ENCODE measurements at regions of chr9 and their contacts with region 1.

Region 1: GRCh38 chr9:75953218-75953617 is 62.7 kb downstream of the PCSK5 start:
- DNase-seq: no peak
- ATAC-seq: no peak
- H3K4me3 ChIP-seq: no peak overlapping the region
- H3K27ac ChIP-seq: no peak overlapping the region
- H3K4me1 ChIP-seq: peaks cover 3% of the 10 kb centered on the region; the same call in 1 of the 2 replicates
- H3K27me3 ChIP-seq: no peaks in the 10 kb centered on the region
- CTCF ChIP-seq: no peak
- POLR2A ChIP-seq: no peak
- RAD21 ChIP-seq: no peak

Region 2: DNA sequence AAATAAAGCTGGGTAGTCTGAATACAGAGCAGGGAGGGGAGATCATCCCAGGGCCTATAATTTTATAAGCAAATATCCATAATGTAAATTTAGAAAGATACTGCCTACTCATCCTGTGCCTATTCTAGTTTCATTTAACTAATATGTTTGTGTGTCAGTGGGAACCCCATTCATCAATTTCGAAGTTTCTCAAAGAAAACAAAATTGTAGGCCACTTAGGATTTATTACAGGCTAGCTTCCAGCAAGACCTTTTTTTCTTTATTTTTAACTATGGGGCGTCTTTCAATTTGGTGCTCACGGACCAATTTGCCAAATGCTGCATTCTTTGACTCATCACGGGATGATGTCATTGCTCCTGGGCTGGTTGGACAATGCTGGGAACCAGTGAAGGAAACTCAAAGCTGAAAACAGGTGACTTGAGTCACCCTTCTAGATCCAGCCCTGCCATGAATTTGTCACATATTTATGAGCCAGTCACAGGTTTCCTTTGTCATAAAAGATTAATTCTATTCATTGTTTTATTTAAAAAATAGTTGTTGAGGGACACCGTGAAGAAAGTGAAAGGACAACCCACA is 49.3 kb before region 1 on chr9:
- CTCF ChIA-PET with region 1: no interaction called
- POLR2A ChIA-PET with region 1: no interaction called
- dilution Hi-C with region 1: no loop called
- in situ Hi-C with region 1: no loop called
- intact Hi-C with region 1: loop called (anchors 5 kb)
- DNase-seq: peak; percentile 17
- ATAC-seq: no peak
- H3K4me3 ChIP-seq: no peak overlapping the region
- H3K27ac ChIP-seq: no peak overlapping the region
- H3K4me1 ChIP-seq: no peaks in the 10 kb centered on the region
- H3K27me3 ChIP-seq: no peaks in the 10 kb centered on the region
- CTCF ChIP-seq: no peak
- POLR2A ChIP-seq: no peak
- RAD21 ChIP-seq: no peak

Region 3: GRCh38 chr9:75993434-75993833 is 40.2 kb after region 1 on chr9:
- CTCF ChIA-PET with region 1: no interaction called
- POLR2A ChIA-PET with region 1: no interaction called
- dilution Hi-C with region 1: no loop called
- in situ Hi-C with region 1: no loop called
- intact Hi-C with region 1: no loop called
- DNase-seq: peak; percentile 41
- ATAC-seq: no peak
- H3K4me3 ChIP-seq: no peak overlapping the region
- H3K27ac ChIP-seq: no peak overlapping the region
- H3K4me1 ChIP-seq: no peaks in the 10 kb centered on the region
- H3K27me3 ChIP-seq: no peaks in the 10 kb centered on the region
- CTCF ChIP-seq: no peak
- POLR2A ChIP-seq: no peak
- RAD21 ChIP-seq: no peak